Cardiac septum (tissue), 1 donor: ENCODE measurements at regions of chr3 and their contacts with region 1.

Region 1: GRCh38 chr3:177197041-177197727 is at the start of gene TBL1XR1:
- DNase-seq: peak; percentile 96
- total RNA-seq, gene TBL1XR1: 164 TPM

Region 2: GRCh38 chr3:176992565-176992964 is 204.6 kb before region 1 on chr3:
- intact Hi-C with region 1: no loop called
- DNase-seq: no peak

Region 3: DNA sequence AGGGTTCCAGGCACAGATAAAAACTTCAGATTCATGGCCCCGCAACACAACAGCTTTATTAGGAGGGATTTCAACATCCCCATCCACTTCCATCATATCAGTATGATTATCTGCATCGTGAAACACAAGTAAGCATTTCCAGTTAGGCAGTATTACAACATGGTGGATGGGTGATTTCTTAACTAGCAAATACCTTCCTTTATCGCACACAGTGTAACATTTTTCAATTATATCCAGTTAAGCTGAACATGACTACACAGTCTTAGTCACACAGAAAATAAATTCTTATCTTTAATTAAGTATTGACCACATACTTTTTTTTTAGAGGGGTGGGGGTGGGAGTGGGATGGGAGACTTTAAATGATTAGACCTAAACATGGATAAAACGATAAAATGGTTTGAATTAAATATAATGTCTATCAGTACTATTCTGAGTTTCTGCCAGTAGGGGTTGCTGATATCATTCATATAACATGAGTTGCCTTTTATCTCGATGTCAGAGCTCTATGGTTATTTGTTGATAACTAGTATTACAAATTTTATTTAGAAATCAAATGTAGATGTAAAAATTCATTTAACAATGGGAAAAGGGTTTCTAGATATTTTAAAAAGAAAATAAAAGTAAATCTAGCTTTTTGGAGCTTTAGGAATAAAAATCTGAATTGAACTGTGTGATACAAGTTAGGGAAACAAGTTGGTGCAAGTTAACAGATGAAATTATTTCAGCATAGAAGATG is 146.5 kb before region 1 on chr3:
- intact Hi-C with region 1: loop called (anchors 2 kb)
- DNase-seq: no peak

Region 4: DNA sequence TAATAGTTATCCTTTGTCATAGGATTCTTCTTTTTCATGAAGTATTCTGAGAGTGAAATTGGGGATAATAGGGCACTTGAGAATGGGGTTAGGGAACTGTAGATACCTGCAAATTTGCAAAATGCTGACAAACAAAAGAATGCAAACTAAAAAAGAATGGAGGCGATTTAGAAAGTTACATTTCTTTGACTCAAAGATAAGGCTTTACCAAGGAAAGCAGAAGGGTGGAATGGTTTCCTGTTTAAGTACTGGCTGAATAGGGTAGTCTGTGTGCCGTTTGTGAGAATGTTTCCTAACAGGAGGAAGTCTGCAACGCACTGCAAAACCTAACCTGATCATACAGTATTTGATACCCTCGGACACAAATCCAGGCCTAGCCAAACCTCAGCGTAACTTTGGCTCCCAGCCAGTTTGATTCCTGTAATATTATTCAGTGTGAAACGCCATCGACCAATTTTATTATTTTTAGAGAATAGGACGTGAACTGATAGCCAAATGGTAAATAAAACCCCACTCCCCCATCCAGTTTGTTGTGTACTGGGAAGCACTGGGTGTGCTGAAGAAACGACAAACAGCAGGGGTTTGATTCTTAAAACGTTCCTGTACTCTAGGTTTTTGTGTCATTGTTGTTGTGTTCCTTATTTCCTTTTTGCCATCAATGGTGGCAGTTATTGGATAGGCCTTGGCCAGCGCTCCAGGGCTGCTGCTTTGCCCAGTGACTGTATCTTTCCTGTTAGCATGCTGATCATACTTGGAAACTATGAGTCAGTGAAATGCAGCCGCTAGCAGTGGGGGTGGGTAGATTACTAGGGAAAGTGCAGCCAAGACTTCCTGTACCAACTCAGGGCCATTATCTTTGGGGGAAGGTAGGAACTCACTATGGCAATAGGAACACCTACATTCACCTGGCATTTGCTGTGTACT is 148.1 kb after region 1 on chr3:
- intact Hi-C with region 1: loop called (anchors 1 kb)
- DNase-seq: peak; percentile 90

Region 5: DNA sequence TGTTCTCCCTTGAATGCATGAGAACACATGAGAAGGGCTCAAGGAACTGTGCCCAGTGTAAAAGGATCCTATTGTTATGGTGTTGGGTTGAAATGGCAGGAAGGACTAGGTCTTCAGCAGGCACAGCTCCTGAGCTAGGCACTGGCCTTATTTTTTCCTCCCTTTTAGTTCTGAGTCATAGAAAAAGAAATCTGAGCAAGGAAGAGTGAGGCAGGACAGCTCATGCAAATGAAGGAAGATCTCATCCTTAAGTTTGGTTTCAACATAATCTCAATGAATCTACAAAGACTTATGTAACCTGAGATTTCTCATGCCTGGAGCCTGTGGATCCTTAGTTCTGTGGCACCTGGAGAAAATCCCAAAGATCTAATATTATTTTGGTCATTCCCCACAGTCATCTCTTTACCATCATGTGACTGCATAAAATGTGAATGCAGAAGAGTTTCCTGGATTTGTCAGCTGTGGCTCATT is 188.7 kb after region 1 on chr3:
- intact Hi-C with region 1: no loop called
- DNase-seq: no peak

Region 6: DNA sequence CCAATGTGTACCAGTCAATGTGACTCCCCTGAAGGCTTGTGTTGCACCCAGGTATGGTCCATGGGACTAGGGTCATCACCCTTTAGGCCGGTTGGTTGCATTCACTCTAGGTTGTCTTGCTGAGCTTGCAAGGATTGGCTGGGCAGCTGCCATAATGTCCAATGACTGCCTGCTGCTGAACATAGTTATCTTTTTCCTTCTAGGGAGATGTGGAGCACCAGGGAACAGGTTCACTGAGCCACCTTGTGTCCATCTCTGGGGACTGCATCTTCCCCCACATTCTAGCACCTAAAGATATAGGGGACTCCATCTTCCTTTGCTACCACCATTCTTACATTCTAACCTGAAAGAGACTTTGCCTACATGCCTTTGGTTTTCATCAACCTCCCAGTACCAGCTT is 580.5 kb after region 1 on chr3:
- intact Hi-C with region 1: loop called (anchors 10 kb)
- DNase-seq: no peak

Region 7: GRCh38 chr3:178084938-178085816 is 888.0 kb after region 1 on chr3:
- intact Hi-C with region 1: loop called (anchors 5 kb)
- DNase-seq: peak; percentile 90

Region 8: GRCh38 chr3:178385280-178385952 is 1188.2 kb after region 1 on chr3:
- intact Hi-C with region 1: loop called (anchors 5 kb)
- DNase-seq: no peak